AG04449 (cell line): ENCODE measurements at regions of chr1 and their contacts with region 1.

Region 1: DNA sequence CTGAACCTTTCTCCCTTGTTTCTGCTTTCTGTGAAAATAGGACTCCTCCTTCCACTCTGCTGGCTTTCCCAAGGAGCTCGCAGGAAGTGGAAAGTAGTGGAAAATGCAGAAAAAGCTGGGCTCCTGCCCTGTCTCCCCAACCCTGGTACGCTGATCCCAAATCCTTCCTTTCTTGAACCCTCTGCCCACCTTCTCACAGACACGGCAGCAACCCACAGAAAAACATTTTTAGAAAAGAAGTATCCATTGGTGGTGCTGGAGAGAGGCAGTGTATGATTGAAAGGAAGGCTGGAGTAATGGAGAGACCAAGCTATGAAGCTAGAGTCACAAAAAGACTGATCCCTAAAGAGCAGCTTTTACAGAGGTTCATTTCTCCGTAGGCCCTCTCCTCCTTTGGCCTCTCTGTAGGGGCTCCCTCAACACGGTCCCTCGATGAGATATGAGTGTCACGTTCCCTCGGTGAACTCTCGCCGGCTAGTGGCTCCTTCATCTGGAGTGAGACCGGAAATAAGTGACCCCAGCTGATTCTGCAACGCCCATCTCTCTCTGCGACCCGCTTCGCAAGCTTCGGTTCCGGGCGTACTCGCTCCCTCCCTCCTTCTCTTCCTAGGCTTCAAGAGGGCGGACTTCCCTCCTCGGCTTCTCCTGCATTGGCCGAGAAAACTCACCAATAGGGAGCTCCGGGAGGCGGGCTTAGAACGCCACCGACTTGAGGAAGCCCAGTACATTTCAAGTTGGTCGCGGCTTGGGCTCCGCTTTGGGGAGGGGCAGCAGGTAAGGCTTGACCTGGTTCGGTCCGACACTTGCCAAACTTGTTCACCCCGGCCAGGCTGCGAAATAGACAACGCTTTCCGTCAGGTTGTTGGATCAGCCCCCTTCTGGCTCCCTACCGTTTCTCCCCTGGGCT is at the starts of genes ANKRD34A and POLR3GL:
- DNase-seq: no peak
- H3K4me3 ChIP-seq: peak within 1 kb of the TSS; percentile 93
- CTCF ChIP-seq: no peak

Region 2: GRCh38 chr1:145986551-145986950 is 22.3 kb after region 1 on chr1:
- CTCF ChIA-PET with region 1: no interaction called
- POLR2A ChIA-PET with region 1: no interaction called
- DNase-seq: no peak
- H3K4me3 ChIP-seq: no peak overlapping the region
- CTCF ChIP-seq: no peak

Region 3: GRCh38 chr1:146007506-146008133 is 43.4 kb after region 1 on chr1:
- CTCF ChIA-PET with region 1: interaction called, 13 read pairs
- POLR2A ChIA-PET with region 1: no interaction called
- DNase-seq: no peak
- H3K4me3 ChIP-seq: no peak overlapping the region
- CTCF ChIP-seq: no peak

Region 4: GRCh38 chr1:146012737-146013403 is 48.6 kb after region 1 on chr1:
- CTCF ChIA-PET with region 1: interaction called, 10 read pairs
- POLR2A ChIA-PET with region 1: no interaction called
- DNase-seq: no peak
- H3K4me3 ChIP-seq: no peak overlapping the region
- CTCF ChIP-seq: peak; percentile 53

Region 5: DNA sequence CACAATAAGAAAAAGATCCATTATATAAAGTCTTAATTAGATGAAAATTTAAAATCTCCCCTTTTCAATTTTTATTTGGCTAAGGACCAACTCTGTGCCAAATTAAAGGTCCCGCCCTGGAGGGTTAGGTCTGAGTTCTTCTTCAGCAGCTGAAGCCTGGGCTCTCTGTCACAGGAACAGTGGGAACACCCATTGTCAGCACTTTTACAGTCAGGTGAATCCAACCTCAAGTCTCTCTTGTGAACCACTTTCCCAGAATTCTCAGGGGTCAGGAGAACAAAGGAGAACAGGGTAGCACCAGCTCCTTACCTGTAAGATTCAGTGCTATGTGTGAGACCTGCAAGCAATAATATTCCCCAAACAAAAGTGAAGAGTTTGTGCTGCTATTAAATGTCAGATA is 82.4 kb after region 1 on chr1:
- CTCF ChIA-PET with region 1: no interaction called
- POLR2A ChIA-PET with region 1: no interaction called
- DNase-seq: no peak
- H3K4me3 ChIP-seq: no peak overlapping the region
- CTCF ChIP-seq: no peak